PC-9 (cell line): ENCODE measurements at regions of chr11 and their contacts with region 1.

Region 1: GRCh38 chr11:32071811-32072210 is 19.1 kb upstream of the RCN1 start:
- DNase-seq: peak; percentile 65 to 81
- H3K4me3 ChIP-seq: no peak overlapping the region
- H3K27ac ChIP-seq: no peak overlapping the region
- H3K4me1 ChIP-seq: peaks cover 28% of the 10 kb centered on the region
- H3K27me3 ChIP-seq: 0 out of 2 replicates have a peak, but pooled peaks cover 8% of the 10 kb centered on the region
- CTCF ChIP-seq: peak; percentile 70; the same call in 1 of the 2 replicates

Region 2: GRCh38 chr11:31617246-31617645 is 454.6 kb before region 1 on chr11:
- CTCF ChIA-PET with region 1: no interaction called
- POLR2A ChIA-PET with region 1: no interaction called
- intact Hi-C with region 1: no loop called
- DNase-seq: no peak
- H3K4me3 ChIP-seq: no peak overlapping the region
- H3K27ac ChIP-seq: no peak overlapping the region
- H3K4me1 ChIP-seq: no peaks in the 10 kb centered on the region
- H3K27me3 ChIP-seq: no peaks in the 10 kb centered on the region
- CTCF ChIP-seq: no peak

Region 3: DNA sequence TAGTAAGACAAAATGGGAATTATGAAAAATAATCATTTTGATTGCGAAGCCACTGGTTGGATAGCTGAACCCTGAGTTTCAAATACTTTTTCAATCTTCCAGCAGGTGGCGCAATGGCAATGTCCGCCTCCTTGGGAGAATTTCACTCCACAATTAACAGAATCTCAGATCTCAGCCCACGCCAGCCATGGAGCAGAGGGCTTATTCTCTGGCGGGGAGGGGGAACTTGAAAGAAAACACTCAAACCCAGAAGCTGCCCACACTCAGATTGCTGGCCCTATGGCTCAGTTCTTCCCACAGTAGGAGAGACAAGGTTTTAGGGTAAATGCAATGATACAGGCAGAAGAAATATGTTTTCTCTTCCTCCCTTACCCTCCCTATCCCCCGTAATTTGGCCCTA is 19.6 kb before region 1 on chr11:
- CTCF ChIA-PET with region 1: interaction called, 4 read pairs
- POLR2A ChIA-PET with region 1: no interaction called
- intact Hi-C with region 1: loop called (anchors 1 kb)
- DNase-seq: peak in 1 of 2 experiments; percentile 54
- H3K4me3 ChIP-seq: no peak overlapping the region
- H3K27ac ChIP-seq: no peak overlapping the region
- H3K4me1 ChIP-seq: no peaks in the 10 kb centered on the region
- H3K27me3 ChIP-seq: peaks cover 3% of the 10 kb centered on the region; the same call in 1 of the 2 replicates
- CTCF ChIP-seq: peak; percentile 91

Region 4: GRCh38 chr11:32154275-32154674 is 82.5 kb after region 1 on chr11:
- CTCF ChIA-PET with region 1: no interaction called
- POLR2A ChIA-PET with region 1: no interaction called
- intact Hi-C with region 1: loop called (anchors 5 kb)
- DNase-seq: peak in 1 of 2 experiments; percentile 37
- H3K4me3 ChIP-seq: no peak overlapping the region
- H3K27ac ChIP-seq: no peak overlapping the region
- H3K4me1 ChIP-seq: no peaks in the 10 kb centered on the region
- H3K27me3 ChIP-seq: no peaks in the 10 kb centered on the region
- CTCF ChIP-seq: peak; percentile 45; the same call in 1 of the 2 replicates